Pancreas (tissue), 10 donors: ENCODE measurements at regions of chr14 and their contacts with region 1.

Region 1: GRCh38 chr14:63852817-63853731 is at the start of gene SYNE2:
- DNase-seq: peak; percentile 76 to 95 (median 84)
- ATAC-seq: peak; percentile 88 to 94 (median 94)
- H3K4me3 ChIP-seq: peak within 1 kb of the TSS; percentile 43 to 80 (median 78)
- H3K27ac ChIP-seq: peak within 1 kb of the TSS; percentile 76 to 95 (median 89)
- H3K4me1 ChIP-seq: peaks cover 0 to 14% (median 8%) of the 10 kb centered on the region in 3 donors
- H3K27me3 ChIP-seq: no peaks in the 10 kb centered on the region
- CTCF ChIP-seq: peak in 1 of 4 donors; percentile 20
- total RNA-seq, gene SYNE2: 45.2 to 103 (median 57.4) TPM

Region 2: GRCh38 chr14:63922696-63923421 is 69.8 kb after region 1 on chr14:
- intact Hi-C with region 1: loop called in 1 of 3 experiments (anchors 10 kb)
- DNase-seq: peak in 3 of 6 donors; percentile 6 to 69 (median 25)
- ATAC-seq: peak; percentile 95 to 98 (median 96)
- H3K4me3 ChIP-seq: no peak overlapping the region
- H3K27ac ChIP-seq: peak overlapping the region; percentile 7 to 83 (median 54)
- H3K4me1 ChIP-seq: peaks cover 5 to 22% (median 14%) of the 10 kb centered on the region in 3 donors
- H3K27me3 ChIP-seq: no peaks in the 10 kb centered on the region
- CTCF ChIP-seq: no peak

Region 3: DNA sequence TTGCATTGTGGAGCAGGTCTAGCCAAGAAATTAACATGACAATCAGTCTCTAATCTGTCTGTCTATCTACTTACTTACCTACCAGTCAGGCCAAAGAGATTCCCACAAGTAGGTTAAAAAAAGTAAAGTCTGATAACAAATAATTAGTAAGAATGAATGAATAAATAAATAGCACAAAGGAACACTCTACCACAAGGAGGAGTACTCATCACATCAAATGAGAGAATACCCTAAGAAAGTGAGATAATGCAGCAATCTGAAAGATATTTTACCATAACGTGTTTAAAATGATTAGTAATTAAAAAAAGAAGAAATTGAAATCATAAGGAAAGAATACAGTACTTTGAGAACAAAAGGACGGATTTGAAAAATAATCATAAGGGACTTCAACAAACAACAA is 187.0 kb after region 1 on chr14:
- intact Hi-C with region 1: no loop called
- DNase-seq: no peak
- ATAC-seq: no peak
- H3K4me3 ChIP-seq: no peak overlapping the region
- H3K27ac ChIP-seq: no peak overlapping the region
- H3K4me1 ChIP-seq: no peaks in the 10 kb centered on the region
- H3K27me3 ChIP-seq: no peaks in the 10 kb centered on the region
- CTCF ChIP-seq: no peak